ENCODE measurements at regions of chr1 and their contacts with region 1.

Region 1: DNA sequence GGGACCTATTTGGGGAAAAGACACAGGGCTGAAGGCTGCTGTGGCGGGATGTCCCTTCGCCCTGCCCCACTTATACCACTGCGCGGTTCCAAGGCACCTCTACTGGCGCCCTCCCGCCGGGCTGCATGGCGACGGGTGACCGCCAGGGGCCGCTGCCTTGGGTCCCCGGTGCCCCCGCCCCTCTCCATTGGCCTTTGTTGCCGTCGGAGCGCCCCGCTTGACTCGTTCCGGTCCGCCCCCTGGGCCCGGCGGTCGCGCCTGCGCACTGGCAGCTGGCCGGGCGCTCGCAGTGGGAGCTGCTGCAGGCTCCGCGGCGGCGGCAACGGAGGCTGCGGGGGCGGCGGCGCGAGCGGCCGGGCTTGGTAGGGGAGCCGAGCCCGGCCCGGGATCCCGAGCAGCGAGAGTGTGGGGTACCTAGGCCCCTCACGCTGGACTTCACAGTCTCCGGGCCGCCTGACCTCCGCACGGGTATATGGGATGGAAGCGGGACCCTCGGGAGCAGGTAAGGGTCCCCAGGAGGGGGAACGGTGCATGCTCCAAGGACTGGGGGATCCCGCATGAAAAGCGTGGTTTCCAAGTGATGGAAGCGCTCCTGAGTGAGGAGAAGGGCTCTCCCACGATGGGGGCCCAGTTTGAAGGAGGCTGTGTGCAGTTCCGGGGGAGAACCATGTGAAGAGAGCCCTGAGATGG is at the start of gene AGO1:
- H3K4me3 ChIP-seq: peak within 1 kb of the TSS; percentile 90
- H3K27ac ChIP-seq: peak within 1 kb of the TSS; percentile 80; the same call in 1 of the 2 replicates
- H3K4me1 ChIP-seq: peaks cover 20% of the 10 kb centered on the region
- CTCF ChIP-seq: peak; percentile 97

Region 2: DNA sequence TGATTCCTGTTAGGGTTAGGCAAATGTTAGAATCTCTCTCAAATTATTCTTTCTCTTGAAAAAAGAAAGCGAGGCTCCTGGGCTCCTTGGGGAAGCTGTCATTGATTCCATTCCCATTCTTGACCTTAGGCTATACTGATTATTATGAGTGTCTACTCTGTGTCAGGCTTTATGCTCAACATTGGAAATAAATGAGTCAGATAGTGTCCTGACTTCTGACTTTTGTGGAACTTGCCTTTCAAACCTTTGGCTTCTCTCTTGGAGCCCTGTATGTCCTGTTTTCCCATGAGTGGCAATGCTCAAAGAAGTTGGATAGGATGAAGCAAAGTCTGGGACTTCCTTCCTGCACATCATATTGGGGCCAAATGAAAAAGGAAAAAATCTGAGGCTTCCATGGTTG is 11.6 kb after region 1 on chr1:
- CTCF ChIA-PET with region 1: interaction called, 15 read pairs
- POLR2A ChIA-PET with region 1: interaction called, 3 read pairs
- H3K4me3 ChIP-seq: no peak overlapping the region
- H3K27ac ChIP-seq: no peak overlapping the region
- H3K4me1 ChIP-seq: no peaks in the 10 kb centered on the region
- CTCF ChIP-seq: no peak

Region 3: DNA sequence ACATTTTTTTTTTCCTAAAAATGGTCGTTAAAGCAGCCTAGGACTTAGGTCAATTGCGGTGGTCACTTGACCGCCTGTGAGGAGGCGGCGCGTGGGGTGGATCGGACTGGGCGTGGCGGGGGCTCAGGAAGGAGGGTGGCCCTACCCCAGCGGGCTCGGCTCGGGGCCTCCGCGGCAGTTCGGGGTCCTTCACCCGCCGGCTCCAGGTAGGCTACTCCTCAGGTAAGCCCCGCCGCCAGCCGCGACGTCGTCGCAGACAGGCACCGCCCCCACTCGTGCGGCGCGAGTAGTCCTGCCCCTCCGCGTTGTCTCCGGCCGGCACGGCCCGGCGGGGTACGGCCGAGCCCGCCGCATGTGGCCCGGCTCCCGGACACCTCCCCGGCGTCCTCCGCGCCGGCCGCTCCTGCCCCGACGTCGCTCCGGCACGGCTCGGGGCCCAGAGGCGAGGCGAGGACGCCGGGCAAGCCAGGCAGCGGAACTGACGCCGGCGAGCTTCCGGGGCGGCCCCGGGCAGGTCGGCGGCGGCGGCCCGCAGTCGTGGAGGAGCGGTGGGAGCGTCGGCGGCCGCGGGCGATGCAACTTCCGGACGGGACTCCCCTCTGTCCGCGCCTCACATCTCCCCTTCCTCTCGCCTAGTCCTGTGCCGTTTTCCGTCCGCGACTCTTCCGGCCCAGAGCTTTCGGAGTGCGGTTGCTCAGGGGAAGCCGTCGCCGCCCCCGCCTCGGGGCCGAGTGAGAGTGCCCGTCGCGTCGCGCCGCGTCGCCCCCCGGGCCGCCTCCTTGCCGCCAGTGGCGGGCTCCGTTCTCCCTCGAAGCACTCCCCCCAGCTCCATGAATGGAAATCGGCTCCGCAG is 47.7 kb after region 1 on chr1 and contains the start of gene AGO3:
- CTCF ChIA-PET with region 1: interaction called, 7 read pairs
- POLR2A ChIA-PET with region 1: interaction called, 13 read pairs
- H3K4me3 ChIP-seq: peak within 1 kb of the TSS; percentile 95
- H3K27ac ChIP-seq: peak within 1 kb of the TSS; percentile 96
- H3K4me1 ChIP-seq: peaks cover 22% of the 10 kb centered on the region
- CTCF ChIP-seq: peak; percentile 24; the same call in 1 of the 2 replicates